Colonic mucosa (tissue), 4 donors: ENCODE measurements at regions of chr2 and their contacts with region 1.

Region 1: GRCh38 chr2:9984217-9984739 is 32.8 kb downstream of the GRHL1 start:
- DNase-seq: no peak
- H3K4me3 ChIP-seq: no peak overlapping the region
- H3K27ac ChIP-seq: peak overlapping the region; percentile 36
- H3K4me1 ChIP-seq: no peaks in the 10 kb centered on the region
- H3K27me3 ChIP-seq: no peaks in the 10 kb centered on the region
- CTCF ChIP-seq: peak; percentile 79

Region 2: DNA sequence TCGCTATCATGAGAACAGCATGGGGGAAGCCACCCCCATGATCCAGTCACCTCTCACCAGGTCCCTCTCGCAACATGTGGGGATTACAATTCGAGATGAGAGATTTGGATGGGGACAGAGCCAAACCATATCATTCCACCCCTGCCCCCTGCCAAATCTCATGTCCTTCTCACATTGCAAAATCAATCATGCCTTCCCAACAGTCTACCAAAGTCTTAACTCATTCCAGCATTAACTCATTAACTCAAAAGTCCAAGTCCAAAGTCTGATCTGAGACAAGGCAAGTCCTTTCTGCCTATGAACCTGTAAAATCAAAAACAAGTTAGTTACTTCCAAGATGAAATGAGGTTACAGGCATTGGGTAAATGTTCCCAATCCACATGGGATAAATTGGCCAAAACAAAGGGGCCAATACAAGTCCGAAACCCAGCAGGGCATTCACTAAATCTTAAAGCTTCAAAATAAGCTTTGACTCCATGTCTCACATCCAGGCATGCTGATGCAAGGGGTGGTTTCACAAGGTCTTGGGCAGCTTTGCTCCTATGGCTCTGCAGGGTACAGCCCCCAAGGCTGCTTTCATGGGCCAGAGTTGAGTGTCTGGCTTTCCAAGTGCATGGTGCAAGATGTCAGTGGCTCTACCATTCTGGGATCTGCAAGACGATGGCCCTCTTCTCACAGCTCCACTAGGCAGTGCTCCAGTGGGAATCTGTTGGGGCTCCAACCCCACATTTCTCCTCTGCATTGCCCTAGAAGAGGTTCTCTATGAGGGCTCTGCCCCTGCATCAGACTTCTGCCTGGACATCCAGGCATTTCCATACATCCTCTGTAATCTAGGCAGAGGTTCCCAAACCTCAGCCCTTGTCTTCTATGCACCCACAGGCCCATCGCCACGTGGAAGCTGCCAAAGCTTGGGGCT is 126.2 kb before region 1 on chr2:
- intact Hi-C with region 1: no loop called
- DNase-seq: no peak
- H3K4me3 ChIP-seq: no peak overlapping the region
- H3K27ac ChIP-seq: no peak overlapping the region
- H3K4me1 ChIP-seq: no peaks in the 10 kb centered on the region
- H3K27me3 ChIP-seq: no peaks in the 10 kb centered on the region
- CTCF ChIP-seq: no peak

Region 3: DNA sequence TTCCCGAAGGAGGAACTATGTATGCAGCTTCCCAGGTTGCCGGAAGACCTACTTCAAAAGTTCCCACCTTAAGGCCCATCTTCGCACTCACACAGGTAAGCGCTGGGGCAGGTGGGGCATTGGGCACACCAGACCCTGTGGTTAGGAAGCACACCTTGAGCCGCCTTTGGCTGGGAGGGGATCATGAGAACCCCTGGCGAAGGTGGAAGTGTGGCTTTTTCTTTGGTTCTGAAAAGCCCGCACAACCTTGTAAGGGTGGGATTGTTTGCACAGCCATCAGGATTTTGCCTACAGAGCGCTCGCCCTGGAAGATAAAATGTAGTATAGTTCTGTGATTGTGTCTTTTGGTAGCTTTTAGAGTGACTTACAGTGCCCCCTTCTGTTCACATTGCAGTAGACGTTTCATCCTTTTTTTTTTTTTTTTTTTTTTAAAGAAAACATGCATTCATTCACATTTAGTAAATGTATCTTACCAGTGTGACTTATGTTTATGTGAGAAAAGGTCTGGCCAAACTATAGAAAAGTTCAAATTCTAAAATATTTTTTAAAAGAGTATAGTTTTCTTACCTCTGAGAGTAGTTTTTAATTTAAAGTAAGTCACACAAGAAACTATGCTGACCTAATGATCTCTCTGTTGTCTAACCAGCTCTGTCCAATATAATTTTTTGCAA is 64.4 kb after region 1 on chr2:
- intact Hi-C with region 1: loop called (anchors 5 kb)
- DNase-seq: peak; percentile 31
- H3K4me3 ChIP-seq: no peak overlapping the region
- H3K27ac ChIP-seq: no peak overlapping the region
- H3K4me1 ChIP-seq: no peaks in the 10 kb centered on the region
- H3K27me3 ChIP-seq: no peaks in the 10 kb centered on the region
- CTCF ChIP-seq: peak; percentile 58

Region 4: GRCh38 chr2:11004199-11004598 is 1019.9 kb after region 1 on chr2:
- intact Hi-C with region 1: no loop called
- DNase-seq: no peak
- H3K4me3 ChIP-seq: no peak overlapping the region
- H3K27ac ChIP-seq: no peak overlapping the region
- H3K4me1 ChIP-seq: no peaks in the 10 kb centered on the region
- H3K27me3 ChIP-seq: no peaks in the 10 kb centered on the region
- CTCF ChIP-seq: no peak